ENCODE measurements at regions of chr16 and their contacts with region 1.

Region 1: GRCh38 chr16:46689365-46690280 is at the start of gene ORC6:
- DNase-seq: peak; percentile 97 to 99 (median 98)
- ATAC-seq: peak; percentile 90 to 93 (median 92)
- H3K4me3 ChIP-seq: peak within 1 kb of the TSS; percentile 52 to 97 (median 87)
- H3K27ac ChIP-seq: peak within 1 kb of the TSS; percentile 70 to 98 (median 92)
- H3K4me1 ChIP-seq: peaks cover 0 to 53% (median 30%) of the 10 kb centered on the region in 12 donors
- H3K27me3 ChIP-seq: no peaks in the 10 kb centered on the region
- CTCF ChIP-seq: peak in 6 of 12 donors; percentile 28 to 43 (median 30)
- POLR2A ChIP-seq: no peak
- total RNA-seq, gene ORC6: 1.3 to 4.3 (median 2.5) TPM

Region 2: DNA sequence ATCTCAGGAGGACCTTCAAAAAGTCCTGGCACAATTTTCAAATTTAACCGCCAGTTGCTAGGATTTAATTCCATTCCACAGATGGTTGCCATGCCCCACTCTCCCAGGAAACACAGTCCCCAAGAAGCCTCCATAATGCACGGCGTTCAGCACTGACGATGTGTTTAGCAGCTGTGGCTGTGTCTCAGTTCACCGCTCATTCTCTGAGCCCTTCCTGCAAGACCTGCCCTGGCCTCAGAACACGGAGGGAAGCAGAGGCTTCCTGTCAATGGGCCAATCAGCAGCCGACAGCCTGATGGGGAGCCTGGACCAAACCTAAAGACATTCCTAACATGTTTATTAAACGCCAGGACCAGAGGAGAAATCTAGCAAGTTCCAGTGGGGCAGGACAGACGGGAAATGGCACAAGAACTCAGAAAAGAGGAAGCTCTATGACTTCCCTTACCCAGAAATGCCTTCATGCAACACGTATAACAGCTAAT is 53.7 kb after region 1 on chr16:
- intact Hi-C with region 1: loop called in 2 of 10 experiments (anchors 10 kb)
- DNase-seq: peak in 3 of 5 donors; percentile 40 to 81 (median 73)
- ATAC-seq: peak; percentile 0 to 18 (median 13)
- H3K4me3 ChIP-seq: peak overlapping the region in 10 of 12 donors; percentile 6 to 77 (median 56)
- H3K27ac ChIP-seq: peak overlapping the region; percentile 67 to 100 (median 95)
- H3K4me1 ChIP-seq: peaks cover 0 to 46% (median 18%) of the 10 kb centered on the region in 12 donors
- H3K27me3 ChIP-seq: no peaks in the 10 kb centered on the region
- CTCF ChIP-seq: no peak
- POLR2A ChIP-seq: no peak

Region 3: DNA sequence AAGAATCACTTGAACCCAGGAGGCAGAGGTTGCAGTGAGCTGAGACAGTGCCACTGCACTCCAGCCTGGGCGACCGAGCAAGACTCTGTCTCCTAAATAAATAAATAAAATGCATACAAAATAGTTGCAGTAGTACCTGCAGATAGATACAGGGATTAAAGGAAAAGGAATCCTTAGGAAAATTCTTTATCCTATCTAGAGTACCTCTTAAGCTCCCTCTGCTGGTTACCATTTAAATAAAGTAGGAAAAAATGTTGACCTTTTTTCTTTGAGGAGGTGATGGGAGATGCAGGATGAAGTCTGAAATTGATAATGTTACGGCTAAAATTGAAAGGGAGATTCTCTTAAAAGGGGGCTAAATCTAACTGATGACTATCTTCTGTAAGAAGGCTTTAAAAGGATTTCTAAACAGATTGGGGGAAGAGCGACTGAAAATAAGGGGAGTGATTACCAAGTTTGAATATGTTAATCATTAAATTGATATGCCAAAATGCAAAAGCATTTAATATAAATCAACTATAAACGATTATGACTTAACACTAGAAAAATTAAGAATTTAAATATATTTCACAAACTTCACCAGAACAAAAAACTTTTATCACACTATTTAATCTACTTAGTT is 111.9 kb after region 1 on chr16:
- intact Hi-C with region 1: loop called in 5 of 10 experiments (anchors 5 to 10 kb)
- DNase-seq: no peak
- ATAC-seq: peak in 2 of 4 donors; percentile 55 to 56
- H3K4me3 ChIP-seq: no peak overlapping the region
- H3K27ac ChIP-seq: no peak overlapping the region
- H3K4me1 ChIP-seq: no peaks in the 10 kb centered on the region
- H3K27me3 ChIP-seq: no peaks in the 10 kb centered on the region
- CTCF ChIP-seq: peak; percentile 19 to 60 (median 50)
- POLR2A ChIP-seq: no peak

Region 4: GRCh38 chr16:46899443-46900143 is 210.0 kb after region 1 on chr16:
- intact Hi-C with region 1: loop called in 1 of 10 experiments (anchors 10 kb)
- DNase-seq: no peak
- ATAC-seq: no peak
- H3K4me3 ChIP-seq: no peak overlapping the region
- H3K27ac ChIP-seq: no peak overlapping the region
- H3K4me1 ChIP-seq: peaks cover 4 to 34% (median 16%) of the 10 kb centered on the region in 12 donors
- H3K27me3 ChIP-seq: no peaks in the 10 kb centered on the region
- CTCF ChIP-seq: no peak
- POLR2A ChIP-seq: no peak

Measured in heart left ventricle (tissue), 16 donors.